PC-3 (cell line): ENCODE measurements at regions of chr2 and their contacts with region 1.

Region 1: GRCh38 chr2:29115797-29116781 is 874 bp downstream of the CLIP4 start:
- DNase-seq: peak; percentile 62
- ATAC-seq: peak; percentile 6
- H3K4me3 ChIP-seq: peak overlapping the region; percentile 82
- H3K27ac ChIP-seq: peak overlapping the region; percentile 88
- H3K4me1 ChIP-seq: peaks cover 69% of the 10 kb centered on the region
- H3K27me3 ChIP-seq: no peaks in the 10 kb centered on the region
- CTCF ChIP-seq: no peak

Region 2: GRCh38 chr2:29053670-29054400 is 62.3 kb before region 1 on chr2:
- CTCF ChIA-PET with region 1: no interaction called
- POLR2A ChIA-PET with region 1: interaction called, 4 read pairs
- intact Hi-C with region 1: loop called (anchors 5 kb)
- DNase-seq: peak; percentile 43
- ATAC-seq: peak; percentile 85
- H3K4me3 ChIP-seq: no peak overlapping the region
- H3K27ac ChIP-seq: no peak overlapping the region
- H3K4me1 ChIP-seq: peaks cover 12% of the 10 kb centered on the region
- H3K27me3 ChIP-seq: no peaks in the 10 kb centered on the region
- CTCF ChIP-seq: peak; percentile 61

Region 3: DNA sequence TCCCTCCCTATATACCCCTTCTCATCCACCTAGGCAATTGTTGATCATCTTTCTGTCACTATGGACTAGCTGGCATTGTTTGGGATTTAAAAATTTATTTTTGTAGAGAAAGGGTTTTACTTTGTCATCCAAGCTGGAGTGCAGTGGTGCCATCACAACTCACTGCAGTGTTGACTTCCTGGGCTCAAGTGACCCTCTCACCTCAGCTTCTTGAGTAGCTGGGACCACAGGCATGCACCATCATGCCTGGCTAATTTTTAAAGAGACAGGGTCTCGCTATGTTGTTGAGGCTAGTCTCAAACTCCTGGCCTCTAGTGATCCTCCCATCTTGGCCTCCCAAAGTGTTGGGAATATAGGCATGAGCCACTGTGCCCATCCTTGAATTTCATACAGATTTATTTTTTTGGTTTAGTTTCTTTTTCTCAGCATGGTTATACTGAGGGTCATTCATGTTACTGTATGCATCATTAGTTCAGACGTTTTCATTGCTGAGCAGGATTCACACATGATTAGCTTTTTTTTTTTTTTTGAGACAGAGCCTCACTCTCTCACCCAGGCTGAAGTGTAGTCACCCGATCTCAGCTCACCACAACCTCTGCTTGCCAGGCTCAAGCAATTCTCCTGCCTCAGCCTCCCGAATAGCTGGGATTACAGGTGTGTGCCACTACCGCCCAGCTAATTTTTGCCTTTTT is 33.1 kb before region 1 on chr2:
- CTCF ChIA-PET with region 1: no interaction called
- POLR2A ChIA-PET with region 1: no interaction called
- intact Hi-C with region 1: no loop called
- DNase-seq: no peak
- ATAC-seq: no peak
- H3K4me3 ChIP-seq: no peak overlapping the region
- H3K27ac ChIP-seq: no peak overlapping the region
- H3K4me1 ChIP-seq: no peaks in the 10 kb centered on the region
- H3K27me3 ChIP-seq: no peaks in the 10 kb centered on the region
- CTCF ChIP-seq: no peak

Region 4: DNA sequence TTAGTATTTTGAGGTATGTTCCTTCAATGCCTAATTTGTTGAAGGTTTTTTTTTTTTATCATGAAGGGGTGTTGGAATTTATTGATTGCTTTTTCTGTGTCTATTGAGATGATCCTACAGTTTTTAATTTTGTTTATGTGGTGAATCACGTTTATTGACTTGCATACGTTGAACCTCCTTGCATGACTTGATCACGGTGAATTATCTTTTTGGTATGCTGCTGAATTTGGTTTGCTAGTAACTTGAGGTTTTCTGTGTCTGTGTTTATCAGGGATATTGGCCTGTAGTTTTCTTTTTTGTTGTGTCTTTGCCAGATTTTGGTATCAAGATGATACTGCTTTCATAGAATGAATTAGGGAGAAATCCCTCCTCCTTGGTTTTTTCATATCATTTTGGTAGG is 23.1 kb after region 1 on chr2:
- CTCF ChIA-PET with region 1: interaction called, 15 read pairs
- POLR2A ChIA-PET with region 1: no interaction called
- intact Hi-C with region 1: no loop called
- DNase-seq: peak; percentile 77
- ATAC-seq: peak; percentile 71
- H3K4me3 ChIP-seq: peak overlapping the region; percentile 46
- H3K27ac ChIP-seq: peak overlapping the region; percentile 58
- H3K4me1 ChIP-seq: peaks cover 17% of the 10 kb centered on the region
- H3K27me3 ChIP-seq: no peaks in the 10 kb centered on the region
- CTCF ChIP-seq: no peak

Region 5: GRCh38 chr2:29182931-29183330 is 66.8 kb after region 1 on chr2:
- CTCF ChIA-PET with region 1: no interaction called
- POLR2A ChIA-PET with region 1: interaction called, 7 read pairs
- intact Hi-C with region 1: loop called (anchors 5 kb)
- DNase-seq: peak; percentile 68
- ATAC-seq: peak; percentile 90
- H3K4me3 ChIP-seq: no peak overlapping the region
- H3K27ac ChIP-seq: no peak overlapping the region
- H3K4me1 ChIP-seq: peaks cover 20% of the 10 kb centered on the region
- H3K27me3 ChIP-seq: no peaks in the 10 kb centered on the region
- CTCF ChIP-seq: no peak

Region 6: DNA sequence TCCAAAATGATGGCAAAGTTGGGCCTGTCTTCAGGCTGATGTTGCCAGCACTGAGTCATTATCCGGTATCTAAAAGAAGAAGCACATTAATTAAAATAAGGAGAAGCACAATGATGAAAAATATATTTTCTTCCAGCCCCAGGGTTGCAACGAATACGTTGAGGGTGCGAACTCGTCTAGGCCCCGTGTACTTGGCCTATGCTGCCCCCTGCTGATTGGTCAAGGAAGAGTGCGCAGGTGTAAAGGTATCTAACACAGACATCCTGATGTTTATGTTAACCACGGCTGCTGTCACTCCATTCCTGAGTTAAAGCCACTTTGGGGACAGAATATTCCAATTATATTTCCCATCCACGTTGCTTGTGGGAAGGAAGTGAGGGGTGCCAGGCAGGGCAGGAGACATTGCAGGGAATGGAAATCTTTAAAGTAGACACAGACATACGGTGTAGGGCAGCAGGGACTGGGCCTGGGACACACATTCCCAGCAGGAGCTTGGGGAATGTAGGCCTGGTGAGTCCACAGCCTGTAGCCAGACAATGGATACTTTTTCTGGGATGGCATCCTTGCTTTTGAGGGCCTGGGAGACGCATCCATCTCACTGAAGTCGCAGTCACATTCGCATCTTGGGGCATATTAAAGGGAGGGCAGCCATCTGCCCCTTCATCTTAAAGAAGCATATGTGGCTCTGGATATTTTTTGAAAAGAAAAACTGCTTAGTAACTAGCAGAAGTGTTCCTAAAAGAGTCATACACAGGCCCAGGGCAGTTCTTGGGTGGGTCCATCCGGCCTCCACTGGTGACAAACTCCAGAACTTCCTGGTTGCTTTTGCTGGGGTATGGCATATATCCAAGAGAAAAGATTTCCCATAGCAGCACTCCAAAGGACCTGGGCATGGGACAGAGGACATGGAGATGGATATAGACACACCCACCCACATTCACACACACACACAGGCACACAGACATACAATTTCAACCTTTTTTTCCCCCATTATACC is 81.0 kb after region 1 on chr2:
- CTCF ChIA-PET with region 1: no interaction called
- POLR2A ChIA-PET with region 1: no interaction called
- intact Hi-C with region 1: loop called (anchors 5 kb)
- DNase-seq: peak; percentile 86
- ATAC-seq: peak; percentile 96
- H3K4me3 ChIP-seq: no peak overlapping the region
- H3K27ac ChIP-seq: no peak overlapping the region
- H3K4me1 ChIP-seq: peaks cover 8% of the 10 kb centered on the region; the same call in 1 of the 2 replicates
- H3K27me3 ChIP-seq: no peaks in the 10 kb centered on the region
- CTCF ChIP-seq: peak; percentile 96